AG04449 (cell line): ENCODE measurements at regions of chr10 and their contacts with region 1.

Region 1: GRCh38 chr10:78047314-78047891 is 13.7 kb downstream of the RPS24 start:
- DNase-seq: peak; percentile 46
- H3K4me3 ChIP-seq: no peak overlapping the region
- CTCF ChIP-seq: peak; percentile 86

Region 2: GRCh38 chr10:78059906-78060702 is 12.7 kb after region 1 on chr10:
- CTCF ChIA-PET with region 1: interaction called, 48 read pairs
- POLR2A ChIA-PET with region 1: no interaction called
- DNase-seq: no peak
- H3K4me3 ChIP-seq: no peak overlapping the region
- CTCF ChIP-seq: no peak

Region 3: DNA sequence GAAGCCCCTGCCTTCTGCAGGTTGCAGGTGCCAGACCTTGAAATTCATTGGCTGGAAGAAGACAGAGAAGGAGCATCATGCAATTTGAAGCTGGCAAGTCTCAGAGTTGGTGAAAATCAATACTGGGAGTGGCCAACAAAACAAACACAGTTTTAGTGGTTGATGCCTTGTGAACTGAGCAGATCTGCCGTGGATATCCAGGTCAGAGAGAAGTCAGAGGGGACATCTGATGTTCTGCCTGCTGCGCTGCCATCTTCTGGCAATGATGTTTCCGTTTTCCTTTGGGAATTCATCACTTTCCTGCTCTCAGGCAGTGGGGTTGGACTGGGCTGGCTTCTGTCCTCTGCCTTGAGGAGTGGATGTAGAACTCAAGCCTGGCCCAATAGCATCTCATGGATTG is 118.2 kb after region 1 on chr10:
- CTCF ChIA-PET with region 1: interaction called, 25 read pairs
- POLR2A ChIA-PET with region 1: no interaction called
- DNase-seq: no peak
- H3K4me3 ChIP-seq: no peak overlapping the region
- CTCF ChIP-seq: no peak

Region 4: GRCh38 chr10:78205457-78206016 is 158.1 kb after region 1 on chr10:
- CTCF ChIA-PET with region 1: interaction called, 18 read pairs
- POLR2A ChIA-PET with region 1: no interaction called
- DNase-seq: no peak
- H3K4me3 ChIP-seq: no peak overlapping the region
- CTCF ChIP-seq: no peak

Region 5: GRCh38 chr10:79189853-79190435 is 1142.5 kb after region 1 on chr10:
- CTCF ChIA-PET with region 1: interaction called, 86 read pairs
- POLR2A ChIA-PET with region 1: no interaction called
- DNase-seq: no peak
- H3K4me3 ChIP-seq: no peak overlapping the region
- CTCF ChIP-seq: no peak

Region 6: GRCh38 chr10:79202188-79203013 is 1155.0 kb after region 1 on chr10:
- CTCF ChIA-PET with region 1: interaction called, 86 read pairs
- POLR2A ChIA-PET with region 1: no interaction called
- DNase-seq: no peak
- H3K4me3 ChIP-seq: no peak overlapping the region
- CTCF ChIP-seq: peak; percentile 72